ENCODE measurements at regions of chr17 and their contacts with region 1.

Region 1: GRCh38 chr17:28717578-28718333 is at the start of gene RAB34:
- DNase-seq: peak; percentile 80 to 92
- H3K4me3 ChIP-seq: peak within 1 kb of the TSS; percentile 95 to 100 (median 98)
- H3K27ac ChIP-seq: peak within 1 kb of the TSS; percentile 77
- H3K4me1 ChIP-seq: peaks cover 4 to 14% (median 8%) of the 10 kb centered on the region in 4 experiments
- H3K27me3 ChIP-seq: no peaks in the 10 kb centered on the region
- CTCF ChIP-seq: peak; percentile 42 to 63 (median 61)
- EP300 ChIP-seq: peak in 1 of 2 experiments; percentile 18; a peak in 1 of 3 replicates
- POLR2A ChIP-seq: peak; percentile 48 to 78
- RAD21 ChIP-seq: peak in 1 of 2 experiments; percentile 12; a peak in 1 of 4 replicates
- total RNA-seq, gene RAB34: 236 and 237 TPM in 2 replicates

Region 2: GRCh38 chr17:28661635-28662537 is 55.9 kb before region 1 on chr17 and contains the starts of genes SDF2 and SUPT6H:
- CTCF ChIA-PET with region 1: interaction called, 4 read pairs
- POLR2A ChIA-PET with region 1: interaction called, 19 read pairs
- DNase-seq: peak in 1 of 2 experiments; percentile 98
- H3K4me3 ChIP-seq: peak within 1 kb of the TSS; percentile 85 to 99 (median 96)
- H3K27ac ChIP-seq: peak within 1 kb of the TSS; percentile 92
- H3K4me1 ChIP-seq: peaks cover 0 to 2% (median 0%) of the 10 kb centered on the region in 4 experiments; a peak in 3 of 7 replicates
- H3K27me3 ChIP-seq: no peaks in the 10 kb centered on the region
- CTCF ChIP-seq: no peak
- EP300 ChIP-seq: no peak
- POLR2A ChIP-seq: peak; percentile 75 to 76; a peak in 2 of 3 replicates
- RAD21 ChIP-seq: no peak
- total RNA-seq, gene SDF2: 43.6 and 44.8 TPM in 2 replicates
- total RNA-seq, gene SUPT6H: 59.9 and 62.4 TPM in 2 replicates

Region 3: GRCh38 chr17:28732699-28733098 is 14.9 kb after region 1 on chr17:
- CTCF ChIA-PET with region 1: interaction called, 20 read pairs
- POLR2A ChIA-PET with region 1: interaction called, 258 read pairs
- DNase-seq: no peak
- H3K4me3 ChIP-seq: no peak overlapping the region
- H3K27ac ChIP-seq: no peak overlapping the region
- H3K4me1 ChIP-seq: no peaks in the 10 kb centered on the region
- H3K27me3 ChIP-seq: no peaks in the 10 kb centered on the region
- CTCF ChIP-seq: no peak
- EP300 ChIP-seq: no peak
- POLR2A ChIP-seq: no peak
- RAD21 ChIP-seq: no peak

Region 4: DNA sequence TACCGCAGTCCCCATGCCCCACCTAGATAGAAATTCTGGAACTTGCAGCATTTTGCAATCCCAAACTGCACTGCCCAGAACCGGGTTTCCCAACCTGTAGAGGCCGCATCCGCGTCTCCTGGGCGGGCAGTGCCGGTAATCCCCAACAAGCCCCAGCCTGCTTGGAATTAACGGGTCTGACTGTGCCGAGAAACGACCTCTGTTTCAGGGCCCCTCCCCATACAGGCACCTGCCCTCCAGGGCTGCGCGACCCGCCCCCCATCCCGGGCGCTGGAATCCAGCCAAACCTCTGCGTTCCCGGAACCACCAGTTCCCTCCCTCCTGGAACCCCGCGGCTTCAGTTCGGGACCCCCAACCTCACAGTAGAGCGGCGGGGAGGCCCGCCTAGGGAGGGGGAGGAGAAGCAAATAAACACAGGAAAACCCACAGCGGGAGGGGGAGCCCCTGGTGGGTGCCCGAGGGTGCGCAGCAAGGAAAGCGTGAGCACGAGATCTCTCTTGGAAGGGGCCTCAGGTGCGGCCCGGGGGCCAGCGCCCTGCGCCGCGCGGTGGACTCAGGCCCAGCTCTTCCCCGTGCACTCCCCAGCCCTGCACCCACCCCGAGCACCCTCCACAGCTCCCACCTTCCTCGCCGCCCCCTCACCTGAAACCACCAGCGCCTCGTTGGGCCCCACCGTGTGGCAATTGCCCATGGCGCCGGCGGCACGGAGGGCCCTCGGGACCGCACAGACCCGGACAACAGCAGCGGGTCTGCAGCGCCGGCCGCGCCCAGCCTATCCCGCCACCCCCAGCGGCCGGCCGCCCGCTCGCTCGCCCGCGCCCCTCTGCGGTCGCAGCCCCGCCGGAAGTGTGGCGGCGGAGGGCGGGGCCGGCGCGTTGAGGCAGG is 179.4 kb after region 1 on chr17 and contains the start of gene FLOT2:
- CTCF ChIA-PET with region 1: interaction called, 4 read pairs
- POLR2A ChIA-PET with region 1: interaction called, 14 read pairs
- DNase-seq: peak; percentile 38 to 83
- H3K4me3 ChIP-seq: peak within 1 kb of the TSS; percentile 79 to 94 (median 89)
- H3K27ac ChIP-seq: peak within 1 kb of the TSS; percentile 68; the same call in 1 of the 2 replicates
- H3K4me1 ChIP-seq: peaks cover 2 to 18% (median 8%) of the 10 kb centered on the region in 4 experiments
- H3K27me3 ChIP-seq: no peaks in the 10 kb centered on the region
- CTCF ChIP-seq: peak in 2 of 3 experiments; percentile 14 to 33; a peak in 3 of 4 replicates
- EP300 ChIP-seq: no peak; a peak in 1 of 3 replicates
- POLR2A ChIP-seq: peak; percentile 56 to 75; a peak in 2 of 3 replicates
- RAD21 ChIP-seq: no peak
- total RNA-seq, gene FLOT2: 116 and 121 TPM in 2 replicates

Region 5: GRCh38 chr17:28951991-28952975 is 234.5 kb after region 1 on chr17:
- CTCF ChIA-PET with region 1: interaction called, 3 read pairs
- POLR2A ChIA-PET with region 1: interaction called, 24 read pairs
- DNase-seq: peak; percentile 89 to 96
- H3K4me3 ChIP-seq: peak overlapping the region; percentile 68 to 97 (median 84)
- H3K27ac ChIP-seq: peak overlapping the region; percentile 92
- H3K4me1 ChIP-seq: peaks cover 9 to 28% (median 14%) of the 10 kb centered on the region in 4 experiments; a peak in 5 of 7 replicates
- H3K27me3 ChIP-seq: no peaks in the 10 kb centered on the region
- CTCF ChIP-seq: no peak
- EP300 ChIP-seq: no peak
- POLR2A ChIP-seq: peak; percentile 49 to 60; a peak in 2 of 3 replicates
- RAD21 ChIP-seq: no peak